ENCODE measurements at regions of chr12 and their contacts with region 1.

Region 1: DNA sequence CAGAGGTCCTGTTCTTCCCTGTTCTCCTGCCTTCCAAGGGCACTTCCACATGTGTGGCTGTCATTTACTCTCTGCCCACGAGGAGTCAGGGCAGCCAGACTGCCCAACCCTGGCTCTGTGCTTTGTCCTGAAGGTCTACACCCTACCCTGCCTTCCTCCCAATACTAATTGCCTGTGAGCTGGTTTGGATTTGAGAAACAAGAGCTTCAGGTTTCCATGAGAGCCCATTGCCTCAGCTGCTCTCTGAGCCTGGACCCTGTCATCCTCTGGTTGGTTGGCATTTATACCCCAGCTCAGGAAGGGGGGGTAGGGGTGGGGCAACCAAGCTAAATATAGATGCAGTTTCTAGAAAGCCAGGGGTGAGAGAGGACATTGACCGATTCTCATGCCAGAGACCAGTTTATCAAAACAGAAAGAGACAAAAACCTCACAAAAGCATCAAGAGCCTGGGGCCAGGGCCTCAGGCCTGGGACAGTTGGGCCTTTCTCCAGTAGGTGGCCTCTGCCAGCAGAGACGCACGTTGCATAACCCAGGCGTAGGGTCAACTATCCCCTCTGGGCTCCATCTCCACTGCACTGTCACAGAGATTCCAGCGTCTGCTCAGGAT is 34.5 kb downstream of the VDR start:
- DNase-seq: peak; percentile 37 to 57 (median 51)
- H3K4me3 ChIP-seq: no peak overlapping the region
- H3K4me3 Mint-ChIP-seq: no peak overlapping the region
- H3K27ac ChIP-seq: peak overlapping the region in 1 of 2 donors; percentile 2
- H3K27ac Mint-ChIP-seq: peak overlapping the region in 4 of 7 donors; percentile 15 to 73 (median 46)
- H3K4me1 ChIP-seq: peaks cover 30 to 35% of the 10 kb centered on the region in 2 donors
- H3K4me1 Mint-ChIP-seq: peaks cover 56% of the 10 kb centered on the region
- H3K27me3 ChIP-seq: no peaks in the 10 kb centered on the region
- H3K27me3 Mint-ChIP-seq: peaks cover 0 to 7% (median 3%) of the 10 kb centered on the region in 3 donors
- CTCF ChIP-seq: peak; percentile 77

Region 2: GRCh38 chr12:47767216-47767724 is 103.0 kb before region 1 on chr12:
- intact Hi-C with region 1: no loop called
- DNase-seq: peak; percentile 43 to 57 (median 57)
- H3K4me3 ChIP-seq: no peak overlapping the region
- H3K4me3 Mint-ChIP-seq: no peak overlapping the region
- H3K27ac ChIP-seq: no peak overlapping the region
- H3K27ac Mint-ChIP-seq: no peak overlapping the region
- H3K4me1 ChIP-seq: peaks cover 14 to 27% of the 10 kb centered on the region in 2 donors
- H3K4me1 Mint-ChIP-seq: peaks cover 17% of the 10 kb centered on the region
- H3K27me3 ChIP-seq: no peaks in the 10 kb centered on the region
- H3K27me3 Mint-ChIP-seq: peaks cover under 1 to 7% (median 6%) of the 10 kb centered on the region in 3 donors
- CTCF ChIP-seq: peak; percentile 77

Region 3: GRCh38 chr12:47904713-47905310 is 34.5 kb after region 1 on chr12 and contains the start of gene VDR:
- intact Hi-C with region 1: loop called in 1 of 2 experiments (anchors 2 kb)
- DNase-seq: peak; percentile 80 to 88 (median 86)
- H3K4me3 ChIP-seq: peak within 1 kb of the TSS; percentile 68 to 84 (median 81)
- H3K4me3 Mint-ChIP-seq: peak within 1 kb of the TSS; percentile 89 to 96
- H3K27ac ChIP-seq: peak within 1 kb of the TSS; percentile 90 to 96
- H3K27ac Mint-ChIP-seq: peak within 1 kb of the TSS; percentile 91 to 96 (median 94)
- H3K4me1 ChIP-seq: peaks cover 52 to 54% of the 10 kb centered on the region in 2 donors
- H3K4me1 Mint-ChIP-seq: peaks cover 51% of the 10 kb centered on the region
- H3K27me3 ChIP-seq: peaks cover 24 to 25% of the 10 kb centered on the region in 2 donors
- H3K27me3 Mint-ChIP-seq: peaks cover 23 to 34% (median 32%) of the 10 kb centered on the region in 3 donors
- CTCF ChIP-seq: peak; percentile 27
- polyA plus RNA-seq, gene VDR: 6.0 to 14.8 (median 12.8) TPM

Region 4: GRCh38 chr12:47949441-47950308 is 79.4 kb after region 1 on chr12:
- intact Hi-C with region 1: loop called (anchors 2 to 5 kb)
- DNase-seq: peak; percentile 51 to 70 (median 60)
- H3K4me3 ChIP-seq: no peak overlapping the region
- H3K4me3 Mint-ChIP-seq: no peak overlapping the region
- H3K27ac ChIP-seq: no peak overlapping the region
- H3K27ac Mint-ChIP-seq: no peak overlapping the region
- H3K4me1 ChIP-seq: peaks cover 12 to 14% of the 10 kb centered on the region in 2 donors
- H3K4me1 Mint-ChIP-seq: peaks cover 20% of the 10 kb centered on the region
- H3K27me3 ChIP-seq: no peaks in the 10 kb centered on the region
- H3K27me3 Mint-ChIP-seq: peaks cover 1 to 8% (median 4%) of the 10 kb centered on the region in 3 donors
- CTCF ChIP-seq: peak; percentile 94